Left ventricle myocardium inferior (tissue), 1 donor: ENCODE measurements at regions of chr16 and their contacts with region 1.

Region 1: GRCh38 chr16:30902029-30902972 is 5.9 kb downstream of the CTF1 start:
- DNase-seq: peak; percentile 73
- H3K4me3 ChIP-seq: peak overlapping the region; percentile 71
- H3K27ac ChIP-seq: peak overlapping the region; percentile 96
- H3K4me1 ChIP-seq: peaks cover 39% of the 10 kb centered on the region
- H3K27me3 ChIP-seq: no peaks in the 10 kb centered on the region
- CTCF ChIP-seq: peak; percentile 45

Region 2: GRCh38 chr16:30429678-30430427 is 472.4 kb before region 1 on chr16 and contains the start of gene DCTPP1:
- intact Hi-C with region 1: no loop called
- DNase-seq: peak; percentile 94
- H3K4me3 ChIP-seq: peak within 1 kb of the TSS; percentile 88
- H3K27ac ChIP-seq: peak within 1 kb of the TSS; percentile 82
- H3K4me1 ChIP-seq: peaks cover 20% of the 10 kb centered on the region
- H3K27me3 ChIP-seq: no peaks in the 10 kb centered on the region
- CTCF ChIP-seq: peak; percentile 81
- total RNA-seq, gene DCTPP1: 31.9 TPM

Region 3: GRCh38 chr16:30844671-30845449 is 57.4 kb before region 1 on chr16:
- intact Hi-C with region 1: loop called (anchors 10 kb)
- DNase-seq: no peak
- H3K4me3 ChIP-seq: peak overlapping the region; percentile 48
- H3K27ac ChIP-seq: peak overlapping the region; percentile 78
- H3K4me1 ChIP-seq: peaks cover 27% of the 10 kb centered on the region
- H3K27me3 ChIP-seq: no peaks in the 10 kb centered on the region
- CTCF ChIP-seq: peak; percentile 89